WTC11 (cell line): ENCODE measurements at regions of chr10 and their contacts with region 1.

Region 1: DNA sequence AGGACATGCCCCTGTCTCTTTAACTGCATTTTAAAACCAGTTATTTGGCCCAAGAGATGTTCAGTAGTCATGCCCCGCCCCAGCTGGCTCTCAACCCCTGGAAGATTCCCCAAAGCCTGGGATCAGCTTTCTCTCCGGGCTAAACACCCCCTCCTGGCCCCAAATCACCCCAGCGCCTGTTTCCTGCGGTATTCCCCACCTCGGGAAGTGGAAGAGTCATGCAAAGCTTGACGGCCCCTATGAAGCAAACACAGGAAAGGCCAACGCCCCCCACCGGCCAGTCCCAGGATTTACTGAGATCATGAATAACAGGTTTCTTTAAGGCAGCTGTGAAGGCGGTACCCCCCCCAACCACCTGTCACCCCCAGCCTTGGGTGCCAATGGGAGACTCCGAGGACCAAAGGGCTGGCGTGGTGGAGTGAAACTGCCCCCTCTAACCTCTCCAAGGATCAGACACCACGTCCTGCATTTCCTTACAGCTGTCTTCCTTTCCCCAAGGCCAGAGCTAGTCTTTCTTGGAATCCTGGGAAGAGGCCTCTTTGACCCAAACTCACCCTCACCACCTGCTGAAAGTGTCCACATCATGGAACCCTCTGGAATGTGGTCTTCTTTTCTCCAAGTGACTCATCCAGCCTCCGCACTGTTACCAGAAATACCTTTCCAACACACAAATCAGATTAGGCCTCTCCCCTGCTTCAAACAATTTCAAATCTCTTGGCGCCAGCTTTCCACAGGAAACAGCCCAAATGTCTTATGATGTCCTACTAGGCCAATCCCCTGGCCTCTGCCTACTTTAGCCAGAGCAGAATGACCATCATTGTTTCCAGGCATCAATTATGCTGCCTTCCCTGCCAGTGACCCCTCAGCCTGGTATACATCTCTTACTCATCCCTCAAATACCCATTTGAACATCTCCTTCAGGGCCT is 301.5 kb downstream of the ZEB1 start:
- DNase-seq: peak; percentile 80
- ATAC-seq: peak; percentile 79
- H3K4me3 Mint-ChIP-seq: no peak overlapping the region
- H3K27ac Mint-ChIP-seq: no peak overlapping the region
- H3K4me1 Mint-ChIP-seq: peaks cover 13% of the 10 kb centered on the region
- H3K27me3 Mint-ChIP-seq: no peaks in the 10 kb centered on the region; the same call in 1 of the 2 replicates
- CTCF ChIP-seq: peak; percentile 44

Region 2: GRCh38 chr10:30751678-30752331 is 868.7 kb before region 1 on chr10:
- CTCF ChIA-PET with region 1: interaction called, 12 read pairs
- POLR2A ChIA-PET with region 1: no interaction called
- DNase-seq: peak; percentile 80
- ATAC-seq: peak; percentile 98
- H3K4me3 Mint-ChIP-seq: no peak overlapping the region
- H3K27ac Mint-ChIP-seq: no peak overlapping the region
- H3K4me1 Mint-ChIP-seq: peaks cover 5% of the 10 kb centered on the region
- H3K27me3 Mint-ChIP-seq: no peaks in the 10 kb centered on the region; the same call in none of the 2 replicates
- CTCF ChIP-seq: peak; percentile 67

Region 3: GRCh38 chr10:31603235-31604087 is 17.0 kb before region 1 on chr10:
- CTCF ChIA-PET with region 1: interaction called, 16 read pairs
- POLR2A ChIA-PET with region 1: no interaction called
- DNase-seq: peak; percentile 98
- ATAC-seq: peak; percentile 96
- H3K4me3 Mint-ChIP-seq: peak overlapping the region; percentile 77
- H3K27ac Mint-ChIP-seq: peak overlapping the region; percentile 43
- H3K4me1 Mint-ChIP-seq: peaks cover 9% of the 10 kb centered on the region
- H3K27me3 Mint-ChIP-seq: peaks cover 11% of the 10 kb centered on the region
- CTCF ChIP-seq: no peak

Region 4: GRCh38 chr10:31644931-31645633 is 24.6 kb after region 1 on chr10:
- CTCF ChIA-PET with region 1: no interaction called
- POLR2A ChIA-PET with region 1: no interaction called
- DNase-seq: no peak
- ATAC-seq: no peak
- H3K4me3 Mint-ChIP-seq: no peak overlapping the region
- H3K27ac Mint-ChIP-seq: no peak overlapping the region
- H3K4me1 Mint-ChIP-seq: peaks cover 6% of the 10 kb centered on the region
- H3K27me3 Mint-ChIP-seq: no peaks in the 10 kb centered on the region
- CTCF ChIP-seq: no peak